ENCODE measurements at regions of chr7 and their contacts with region 1.

Region 1: GRCh38 chr7:102396027-102397019 is at the start of gene PRKRIP1:
- DNase-seq: peak; percentile 100
- H3K4me3 ChIP-seq: peak within 1 kb of the TSS; percentile 84
- H3K27ac ChIP-seq: peak within 1 kb of the TSS; percentile 81
- H3K4me1 ChIP-seq: peaks cover 18% of the 10 kb centered on the region
- CTCF ChIP-seq: no peak
- total RNA-seq, gene PRKRIP1: 47.1 and 60.7 TPM in 2 replicates

Region 2: DNA sequence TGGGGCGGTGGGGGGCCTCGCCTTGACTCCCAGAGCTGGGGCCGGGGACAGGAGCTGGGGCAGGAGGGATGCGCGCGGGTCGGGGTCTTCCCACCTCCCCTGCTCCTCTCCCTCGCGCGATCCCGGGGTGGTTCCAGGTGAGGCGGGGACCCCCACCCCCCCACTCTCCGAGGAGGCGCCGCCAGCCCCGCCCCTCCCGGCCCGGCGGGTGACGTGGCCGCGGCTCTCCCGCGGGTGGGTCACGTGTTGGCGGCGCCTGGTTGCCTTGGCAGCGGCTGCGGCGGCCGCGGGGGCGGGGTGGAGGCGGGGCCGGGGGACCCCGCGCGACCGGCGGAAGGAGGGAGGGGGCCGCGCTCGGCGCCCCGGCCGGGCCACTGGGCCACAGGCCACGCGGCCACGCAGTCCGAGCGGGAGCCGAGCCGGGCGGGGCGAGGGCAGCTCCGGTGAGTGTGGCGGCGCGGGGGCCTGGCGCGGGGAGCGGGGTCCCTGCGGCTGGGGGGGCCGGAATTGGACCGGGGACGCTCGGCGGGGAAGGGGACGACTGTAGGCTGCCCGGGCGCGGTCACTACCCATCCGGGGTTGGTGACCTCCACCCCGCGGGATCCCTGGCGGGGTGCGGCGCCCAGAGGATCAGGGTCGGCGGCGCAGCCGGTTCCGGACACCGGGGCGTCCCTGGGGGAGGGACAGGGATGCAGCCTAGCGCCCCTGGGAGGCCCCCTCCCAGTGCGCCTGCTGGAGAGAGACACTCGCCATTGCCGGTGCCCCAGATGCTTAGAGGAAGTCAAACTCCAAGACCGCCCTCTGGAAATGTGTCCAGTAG is 37.1 kb after region 1 on chr7 and contains the start of gene ORAI2:
- CTCF ChIA-PET with region 1: no interaction called
- POLR2A ChIA-PET with region 1: no interaction called
- intact Hi-C with region 1: loop called (anchors 2 kb)
- DNase-seq: peak; percentile 89
- H3K4me3 ChIP-seq: peak within 1 kb of the TSS; percentile 80
- H3K27ac ChIP-seq: peak within 1 kb of the TSS; percentile 94
- H3K4me1 ChIP-seq: peaks cover 68% of the 10 kb centered on the region
- CTCF ChIP-seq: 0 out of 2 replicates have a peak, but pooled peaks have one; percentile 28
- total RNA-seq, gene ORAI2: 130 and 149 TPM in 2 replicates

Region 3: DNA sequence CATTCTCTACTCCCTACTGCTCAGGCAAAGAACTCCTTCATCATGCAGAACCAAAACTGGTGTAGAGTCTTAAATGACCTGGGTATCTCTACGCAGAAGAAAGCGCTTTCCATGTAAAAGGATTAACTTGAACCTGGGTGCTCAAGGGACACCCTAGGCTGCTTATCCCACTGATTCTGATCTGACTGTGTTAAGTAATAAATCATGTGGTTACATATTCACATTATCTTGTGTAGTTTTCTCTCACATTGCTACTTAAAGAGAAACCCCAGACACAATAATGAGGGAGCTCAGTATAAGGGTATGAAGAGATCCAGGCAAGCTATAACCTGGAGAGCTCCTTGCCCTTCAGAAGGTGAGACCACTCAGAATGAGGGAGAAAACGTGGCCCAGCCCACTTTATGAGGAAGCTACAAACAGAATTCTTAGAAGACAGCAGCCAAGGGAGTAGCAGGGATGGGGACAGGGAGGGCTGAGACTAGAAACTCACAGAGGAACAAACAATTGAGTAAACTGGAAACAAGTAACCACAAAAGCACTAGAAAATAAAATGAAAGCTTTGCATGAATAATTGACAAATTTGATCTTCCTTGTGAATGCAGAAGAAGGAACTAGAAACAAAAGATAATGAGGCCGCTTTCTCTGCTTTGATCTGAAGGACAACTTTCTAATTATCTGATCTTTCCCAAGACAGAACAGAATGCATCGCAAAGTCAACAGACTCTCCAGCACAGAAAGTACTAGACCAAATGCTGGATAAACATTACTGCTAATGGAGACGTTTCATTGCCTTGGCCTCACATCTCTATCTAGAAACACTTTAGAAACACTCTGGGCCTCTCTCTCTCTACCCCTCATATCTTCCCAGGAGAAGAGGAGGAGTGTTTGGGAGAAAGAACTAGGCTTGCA is 592.6 kb after region 1 on chr7:
- CTCF ChIA-PET with region 1: no interaction called
- POLR2A ChIA-PET with region 1: no interaction called
- intact Hi-C with region 1: no loop called
- DNase-seq: no peak
- H3K4me3 ChIP-seq: no peak overlapping the region
- H3K27ac ChIP-seq: no peak overlapping the region
- H3K4me1 ChIP-seq: no peaks in the 10 kb centered on the region
- CTCF ChIP-seq: no peak

Measured in OCI-LY7 (cell line).